CD4-positive, alpha-beta memory T cell (primary cell): ENCODE measurements at regions of chr14 and their contacts with region 1.

Region 1: GRCh38 chr14:55333711-55334485 is 62.7 kb downstream of the FBXO34 start:
- DNase-seq: peak in 4 of 5 donors; percentile 37 to 56 (median 40)
- H3K4me3 ChIP-seq: peak overlapping the region; percentile 11 to 37
- H3K4me3 Mint-ChIP-seq: peak overlapping the region; percentile 81 to 93 (median 89)
- H3K27ac ChIP-seq: peak overlapping the region; percentile 67
- H3K27ac Mint-ChIP-seq: peak overlapping the region; percentile 86 to 97 (median 94)
- H3K4me1 ChIP-seq: peaks cover 84% of the 10 kb centered on the region
- H3K4me1 Mint-ChIP-seq: peaks cover 60 to 90% (median 74%) of the 10 kb centered on the region in 4 donors
- H3K27me3 ChIP-seq: no peaks in the 10 kb centered on the region
- H3K27me3 Mint-ChIP-seq: no peaks in the 10 kb centered on the region

Region 2: GRCh38 chr14:55297611-55298441 is 36.1 kb before region 1 on chr14:
- CTCF ChIA-PET with region 1: interaction called, 10 read pairs
- POLR2A ChIA-PET with region 1: no interaction called
- intact Hi-C with region 1: no loop called
- DNase-seq: peak in 4 of 5 donors; percentile 19 to 40 (median 28)
- H3K4me3 ChIP-seq: no peak overlapping the region
- H3K4me3 Mint-ChIP-seq: peak overlapping the region in 6 of 8 donors; percentile 4 to 70 (median 54)
- H3K27ac ChIP-seq: no peak overlapping the region
- H3K27ac Mint-ChIP-seq: peak overlapping the region in 5 of 7 donors; percentile 12 to 58 (median 33)
- H3K4me1 ChIP-seq: peaks cover 45% of the 10 kb centered on the region
- H3K4me1 Mint-ChIP-seq: peaks cover 46 to 82% (median 64%) of the 10 kb centered on the region in 4 donors
- H3K27me3 ChIP-seq: no peaks in the 10 kb centered on the region
- H3K27me3 Mint-ChIP-seq: no peaks in the 10 kb centered on the region

Region 3: GRCh38 chr14:55316567-55316966 is 17.3 kb before region 1 on chr14:
- CTCF ChIA-PET with region 1: interaction called, 6 read pairs
- POLR2A ChIA-PET with region 1: interaction called, 4 read pairs
- intact Hi-C with region 1: loop called (anchors 2 kb)
- DNase-seq: no peak
- H3K4me3 ChIP-seq: no peak overlapping the region
- H3K4me3 Mint-ChIP-seq: no peak overlapping the region
- H3K27ac ChIP-seq: no peak overlapping the region
- H3K27ac Mint-ChIP-seq: no peak overlapping the region
- H3K4me1 ChIP-seq: no peaks in the 10 kb centered on the region
- H3K4me1 Mint-ChIP-seq: peaks cover 10 to 20% (median 19%) of the 10 kb centered on the region in 4 donors
- H3K27me3 ChIP-seq: no peaks in the 10 kb centered on the region
- H3K27me3 Mint-ChIP-seq: no peaks in the 10 kb centered on the region

Region 4: GRCh38 chr14:55348766-55349453 is 15.0 kb after region 1 on chr14:
- CTCF ChIA-PET with region 1: interaction called, 80 read pairs
- POLR2A ChIA-PET with region 1: interaction called, 47 read pairs
- intact Hi-C with region 1: loop called (anchors 1 kb)
- DNase-seq: peak in 1 of 5 donors; percentile 11
- H3K4me3 ChIP-seq: no peak overlapping the region
- H3K4me3 Mint-ChIP-seq: peak overlapping the region in 7 of 8 donors; percentile 23 to 70 (median 51)
- H3K27ac ChIP-seq: no peak overlapping the region
- H3K27ac Mint-ChIP-seq: peak overlapping the region; percentile 53 to 85 (median 78)
- H3K4me1 ChIP-seq: peaks cover 49% of the 10 kb centered on the region
- H3K4me1 Mint-ChIP-seq: peaks cover 36 to 78% (median 58%) of the 10 kb centered on the region in 4 donors
- H3K27me3 ChIP-seq: no peaks in the 10 kb centered on the region
- H3K27me3 Mint-ChIP-seq: no peaks in the 10 kb centered on the region

Region 5: GRCh38 chr14:55411426-55412389 is 77.8 kb after region 1 on chr14 and contains the start of gene ATG14:
- CTCF ChIA-PET with region 1: no interaction called
- POLR2A ChIA-PET with region 1: no interaction called
- intact Hi-C with region 1: no loop called
- DNase-seq: peak; percentile 65 to 76 (median 73)
- H3K4me3 ChIP-seq: peak within 1 kb of the TSS; percentile 90 to 93
- H3K4me3 Mint-ChIP-seq: peak within 1 kb of the TSS; percentile 88 to 94 (median 92)
- H3K27ac ChIP-seq: peak within 1 kb of the TSS; percentile 78
- H3K27ac Mint-ChIP-seq: peak within 1 kb of the TSS; percentile 45 to 96 (median 91)
- H3K4me1 ChIP-seq: peaks cover 24% of the 10 kb centered on the region
- H3K4me1 Mint-ChIP-seq: peaks cover 27 to 49% (median 38%) of the 10 kb centered on the region in 4 donors
- H3K27me3 ChIP-seq: no peaks in the 10 kb centered on the region
- H3K27me3 Mint-ChIP-seq: peaks cover 0 to 2% of the 10 kb centered on the region in 2 donors
- total RNA-seq, gene ATG14: 18.3 to 18.4 TPM